ENCODE measurements at regions of chr3 and their contacts with region 1.

Region 1: GRCh38 chr3:69306239-69307185 is 79.4 kb downstream of the FRMD4B start:
- DNase-seq: peak; percentile 77

Region 2: DNA sequence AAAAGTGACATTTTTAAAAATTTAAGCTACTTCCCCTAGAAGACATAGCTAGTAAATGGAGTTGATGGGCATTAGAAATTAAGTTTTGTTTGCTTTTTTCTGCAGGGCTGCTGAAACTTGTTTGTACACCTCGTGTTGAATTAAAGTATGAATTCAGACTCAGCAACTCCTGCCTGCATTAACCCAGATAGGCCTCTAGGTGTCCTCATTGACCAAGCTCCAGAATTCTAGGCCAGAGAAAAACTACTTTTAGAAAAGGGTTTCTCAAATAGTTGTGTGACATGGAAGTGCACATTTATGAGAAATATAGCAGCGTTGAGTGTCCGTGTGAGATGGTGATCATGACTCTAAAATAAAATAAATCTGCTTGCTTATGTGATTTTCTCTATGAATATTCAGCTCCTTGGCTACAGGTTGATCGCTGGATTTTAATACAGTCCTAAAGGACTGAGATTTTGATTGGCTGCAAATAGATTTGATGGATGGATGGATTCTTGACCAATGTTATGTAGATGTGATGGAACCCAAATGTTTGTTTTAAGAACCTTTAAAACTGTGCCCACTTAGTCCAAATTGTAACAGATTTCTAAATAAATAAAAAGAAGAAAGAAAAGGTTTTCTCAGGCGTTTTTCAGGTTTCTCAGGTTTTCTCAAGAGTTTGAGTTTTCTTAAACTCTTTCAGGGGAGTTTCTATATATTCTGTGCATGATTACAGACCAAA is 144.8 kb before region 1 on chr3:
- in situ Hi-C with region 1: loop called (anchors 25 kb)
- DNase-seq: peak; percentile 65

Region 3: DNA sequence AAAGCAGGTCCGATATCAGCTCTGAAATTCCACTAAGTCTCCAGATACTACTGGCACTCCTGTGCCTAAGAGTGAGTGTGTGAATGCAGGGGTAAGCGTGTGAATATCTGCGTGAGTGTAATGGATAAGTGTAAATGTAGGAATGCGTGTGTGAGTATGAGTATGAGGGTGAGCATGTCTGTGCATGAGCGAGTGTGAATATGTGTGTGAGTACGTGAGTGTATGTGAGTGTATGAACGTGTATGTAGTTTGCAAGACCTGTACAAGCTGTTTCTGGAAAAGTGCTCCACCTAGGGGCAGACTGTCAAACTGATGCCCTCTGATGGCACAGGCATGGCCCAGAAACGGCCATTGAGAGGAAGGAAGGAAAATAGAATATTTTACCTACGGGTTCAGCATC is 103.7 kb after region 1 on chr3:
- in situ Hi-C with region 1: loop called (anchors 25 kb)
- DNase-seq: peak; percentile 81

Region 4: DNA sequence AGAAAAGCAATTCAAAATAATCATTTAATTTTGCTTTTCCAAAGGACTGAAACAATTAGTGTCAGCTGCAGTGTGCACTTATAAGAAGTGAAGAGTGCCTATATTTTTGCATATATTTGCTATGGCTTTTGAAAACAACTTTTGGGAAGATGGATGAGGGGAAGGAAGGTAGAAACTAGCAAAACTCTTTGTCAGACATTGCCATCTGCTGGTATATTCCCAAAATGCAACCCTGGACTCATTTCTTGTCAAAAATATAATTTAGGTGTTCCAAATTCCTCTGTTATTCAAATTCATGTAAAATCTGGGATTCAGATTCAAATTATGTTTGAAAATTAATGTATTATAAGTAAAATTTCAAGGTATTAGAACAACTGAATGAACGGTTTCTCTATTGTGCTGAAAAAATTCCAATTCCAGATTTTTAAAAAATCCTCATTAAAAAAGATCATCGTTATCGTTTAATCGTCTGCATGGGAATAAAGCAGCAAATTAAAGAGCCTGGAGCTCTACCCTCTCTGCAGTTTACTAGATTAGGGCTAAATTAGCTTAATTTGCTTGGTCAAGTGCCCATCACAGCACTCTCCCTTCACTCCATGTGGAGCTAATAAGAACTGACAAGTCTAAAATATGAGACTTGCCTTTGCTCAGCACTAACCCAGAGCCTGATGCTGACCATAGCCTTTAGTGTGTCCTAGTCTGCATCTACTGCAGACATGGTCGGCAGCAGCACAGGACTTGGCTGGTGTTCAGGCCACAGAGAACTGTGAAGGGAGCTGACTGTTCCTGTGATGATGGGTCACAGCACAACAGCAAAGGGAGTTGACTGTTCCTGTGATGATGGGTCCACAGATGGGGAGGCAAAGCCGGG is 364.8 kb after region 1 on chr3:
- in situ Hi-C with region 1: loop called (anchors 25 kb)
- DNase-seq: peak; percentile 73

Region 5: DNA sequence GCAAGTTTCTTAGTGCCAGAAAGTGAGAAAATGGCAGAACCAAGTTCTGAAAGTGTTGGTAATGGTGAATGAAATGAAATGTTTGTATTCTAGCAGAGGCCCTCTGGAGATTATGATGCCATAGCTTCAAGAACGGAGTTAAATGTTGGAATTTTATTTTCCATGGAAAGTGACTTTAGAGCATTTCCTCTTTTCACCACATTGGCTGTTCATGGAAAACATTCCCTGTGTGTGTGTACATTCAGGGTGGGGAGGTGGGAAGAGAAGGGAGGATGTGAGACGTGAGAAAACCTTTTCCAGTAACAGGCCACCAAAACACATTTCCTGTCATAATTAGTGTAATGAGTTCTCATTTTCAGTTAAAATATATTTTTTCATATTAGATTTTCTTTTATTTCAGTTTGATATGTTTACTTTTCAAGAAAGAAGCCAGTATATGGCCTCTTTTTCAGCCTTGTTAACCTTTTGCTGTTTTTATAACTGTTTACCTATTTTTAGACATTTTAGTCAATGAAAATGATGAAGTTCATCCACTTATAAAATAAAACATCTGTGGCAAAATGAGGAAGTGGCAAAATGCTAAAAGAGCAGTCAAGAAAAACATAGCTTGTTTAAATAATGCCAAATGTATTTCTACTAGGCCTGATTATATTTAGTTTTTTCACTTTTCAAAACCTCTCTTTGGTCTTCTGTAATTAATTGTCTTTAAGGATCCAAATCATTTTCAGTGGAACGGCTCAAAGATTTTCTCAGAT is 714.6 kb after region 1 on chr3:
- in situ Hi-C with region 1: no loop called
- DNase-seq: peak; percentile 2